AG04450 (cell line): ENCODE measurements at regions of chr10 and their contacts with region 1.

Region 1: GRCh38 chr10:123967396-123968243 is 76.0 kb upstream of the CPXM2 start:
- DNase-seq: no peak
- H3K4me3 ChIP-seq: no peak overlapping the region
- H3K27ac ChIP-seq: no peak overlapping the region
- H3K27me3 ChIP-seq: peaks cover 2% of the 10 kb centered on the region
- CTCF ChIP-seq: peak; percentile 77

Region 2: GRCh38 chr10:123582084-123582989 is 385.3 kb before region 1 on chr10:
- CTCF ChIA-PET with region 1: interaction called, 16 read pairs
- POLR2A ChIA-PET with region 1: no interaction called
- DNase-seq: no peak
- H3K4me3 ChIP-seq: no peak overlapping the region
- H3K27ac ChIP-seq: no peak overlapping the region
- H3K27me3 ChIP-seq: no peaks in the 10 kb centered on the region
- CTCF ChIP-seq: peak; percentile 82